MCF 10A (cell line): ENCODE measurements at regions of chr3 and their contacts with region 1.

Region 1: DNA sequence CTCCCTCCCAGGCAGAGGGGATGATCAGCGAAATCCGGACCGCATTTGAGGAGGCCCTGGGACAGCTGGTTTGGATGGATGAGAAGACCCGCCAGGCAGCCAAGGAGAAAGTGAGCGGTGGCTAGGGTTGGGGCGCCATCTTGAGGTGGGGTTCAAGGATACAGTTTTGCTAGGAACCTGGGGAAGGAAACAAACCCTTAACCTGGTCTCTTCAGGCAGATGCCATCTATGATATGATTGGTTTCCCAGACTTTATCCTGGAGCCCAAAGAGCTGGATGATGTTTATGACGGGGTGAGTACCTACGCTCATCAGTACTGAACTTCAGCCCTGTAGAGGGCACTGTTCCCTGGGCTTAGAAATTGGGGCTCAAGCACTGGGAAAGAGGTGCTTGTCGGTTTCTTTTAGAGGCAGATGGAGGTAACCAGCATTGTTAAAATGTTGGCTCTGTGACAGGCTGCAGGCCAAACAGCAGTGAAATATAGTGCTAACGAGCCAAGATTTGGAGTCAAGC is 9.6 kb upstream of the PSMD2 start:
- DNase-seq: peak; percentile 73
- H3K4me3 Mint-ChIP-seq: no peak overlapping the region
- H3K27ac Mint-ChIP-seq: no peak overlapping the region
- H3K4me1 Mint-ChIP-seq: no peaks in the 10 kb centered on the region
- H3K27me3 Mint-ChIP-seq: peaks cover 14% of the 10 kb centered on the region
- CTCF ChIP-seq: peak; percentile 70

Region 2: DNA sequence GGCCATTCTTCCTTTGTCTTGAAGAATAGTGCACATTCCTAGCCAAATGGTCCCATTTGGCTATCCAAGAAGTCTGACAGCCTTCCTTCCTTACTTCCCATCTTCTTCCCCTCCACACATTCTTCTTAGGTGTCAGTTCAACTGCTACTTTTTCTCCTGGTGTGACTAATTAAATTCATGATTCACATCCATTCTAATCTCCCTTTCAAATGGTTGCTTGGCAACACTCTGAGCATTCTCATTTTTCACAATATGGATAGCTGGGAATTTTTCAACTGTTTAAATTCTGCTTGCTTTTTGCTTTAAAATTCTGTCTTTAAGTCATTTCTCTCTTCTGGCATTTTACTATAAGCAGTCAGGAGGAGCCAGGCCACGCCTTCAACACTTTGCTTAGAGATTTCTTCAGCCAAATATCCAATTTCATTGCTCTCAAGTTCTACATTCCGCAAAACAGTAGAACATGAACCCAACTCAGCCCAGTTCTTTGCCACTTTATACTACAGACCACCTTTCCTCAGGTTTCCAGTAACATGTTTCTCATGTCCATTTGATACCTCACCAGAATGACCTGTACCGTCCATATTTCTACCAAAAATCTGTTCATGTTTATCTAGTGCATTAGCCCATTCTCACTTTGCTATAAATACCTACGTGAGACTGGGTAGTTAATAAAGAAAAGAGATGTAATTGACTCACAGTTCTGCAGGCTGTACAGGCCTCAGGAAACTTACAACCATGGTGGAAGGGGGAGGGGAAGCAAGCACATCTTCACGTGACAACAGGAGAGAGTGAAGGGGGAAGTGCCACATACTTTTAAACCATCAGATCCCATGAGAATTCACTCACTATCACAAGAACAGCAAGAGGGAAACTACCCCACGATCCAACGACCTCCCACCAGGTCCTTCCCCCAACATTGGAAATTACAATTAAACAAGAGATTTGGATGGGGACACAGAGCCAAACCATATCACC is 829.1 kb before region 1 on chr3:
- CTCF ChIA-PET with region 1: no interaction called
- POLR2A ChIA-PET with region 1: no interaction called
- intact Hi-C with region 1: loop called (anchors 10 kb)
- DNase-seq: no peak
- H3K4me3 Mint-ChIP-seq: no peak overlapping the region
- H3K27ac Mint-ChIP-seq: no peak overlapping the region
- H3K4me1 Mint-ChIP-seq: peaks cover 6% of the 10 kb centered on the region
- H3K27me3 Mint-ChIP-seq: no peaks in the 10 kb centered on the region
- CTCF ChIP-seq: no peak

Region 3: GRCh38 chr3:183895296-183895695 is 394.2 kb before region 1 on chr3:
- CTCF ChIA-PET with region 1: interaction called, 4 read pairs
- POLR2A ChIA-PET with region 1: no interaction called
- intact Hi-C with region 1: loop called (anchors 1 kb)
- DNase-seq: peak; percentile 60
- H3K4me3 Mint-ChIP-seq: no peak overlapping the region
- H3K27ac Mint-ChIP-seq: no peak overlapping the region
- H3K4me1 Mint-ChIP-seq: no peaks in the 10 kb centered on the region
- H3K27me3 Mint-ChIP-seq: no peaks in the 10 kb centered on the region
- CTCF ChIP-seq: peak; percentile 82

Region 4: DNA sequence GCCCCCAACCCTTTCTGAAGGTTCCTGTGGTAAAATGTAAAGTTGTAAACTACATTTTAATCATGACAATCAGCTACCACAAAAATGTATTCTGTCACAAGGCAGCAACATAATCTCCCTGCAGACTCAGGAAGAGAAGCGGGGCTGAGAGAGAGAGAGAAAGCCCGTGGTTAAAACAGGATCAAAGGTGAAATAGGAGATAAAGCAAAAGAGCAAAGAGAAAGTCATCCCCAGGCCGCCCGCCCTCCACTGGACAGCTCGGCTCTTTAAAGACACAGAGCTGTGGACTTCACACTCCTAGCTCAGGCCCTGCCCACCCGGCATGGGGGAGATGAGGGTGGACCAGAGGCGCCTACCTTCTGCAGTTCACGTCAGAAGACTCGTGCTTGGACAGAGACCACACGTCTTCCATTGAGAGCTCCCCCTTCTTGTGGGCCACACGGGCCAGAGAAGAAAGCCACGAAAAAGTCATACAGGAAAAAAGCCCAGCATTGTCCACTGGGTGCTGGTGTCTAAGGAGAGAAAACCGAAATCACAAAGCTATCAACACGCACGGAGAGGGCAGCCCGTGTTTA is 301.2 kb before region 1 on chr3:
- CTCF ChIA-PET with region 1: no interaction called
- POLR2A ChIA-PET with region 1: no interaction called
- intact Hi-C with region 1: no loop called
- DNase-seq: no peak
- H3K4me3 Mint-ChIP-seq: no peak overlapping the region
- H3K27ac Mint-ChIP-seq: no peak overlapping the region
- H3K4me1 Mint-ChIP-seq: no peaks in the 10 kb centered on the region
- H3K27me3 Mint-ChIP-seq: no peaks in the 10 kb centered on the region
- CTCF ChIP-seq: no peak

Region 5: DNA sequence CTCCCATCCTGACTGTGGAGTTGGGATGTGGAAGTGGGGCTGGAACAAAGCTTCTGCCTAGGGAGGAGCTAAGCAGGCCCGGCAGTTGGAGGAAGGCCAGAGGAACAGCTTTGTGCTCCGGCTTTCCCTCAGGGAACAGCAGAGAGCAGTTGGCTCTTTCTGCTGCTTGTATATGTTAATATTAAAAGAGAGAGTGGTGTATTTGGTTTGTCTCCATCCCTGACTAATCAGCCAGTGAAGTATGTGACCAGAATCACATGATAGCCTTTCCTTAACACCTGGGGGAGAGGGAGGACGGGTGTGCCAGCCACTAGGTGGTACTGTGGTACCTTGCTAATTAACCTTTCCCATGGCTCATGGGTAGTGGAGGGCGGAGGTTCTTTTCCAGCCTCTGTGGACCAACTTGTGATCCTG is 144.4 kb before region 1 on chr3:
- CTCF ChIA-PET with region 1: no interaction called
- POLR2A ChIA-PET with region 1: no interaction called
- intact Hi-C with region 1: loop called (anchors 2 kb)
- DNase-seq: peak; percentile 68
- H3K4me3 Mint-ChIP-seq: no peak overlapping the region
- H3K27ac Mint-ChIP-seq: no peak overlapping the region
- H3K4me1 Mint-ChIP-seq: peaks cover 2% of the 10 kb centered on the region
- H3K27me3 Mint-ChIP-seq: no peaks in the 10 kb centered on the region
- CTCF ChIP-seq: peak; percentile 33

Region 6: DNA sequence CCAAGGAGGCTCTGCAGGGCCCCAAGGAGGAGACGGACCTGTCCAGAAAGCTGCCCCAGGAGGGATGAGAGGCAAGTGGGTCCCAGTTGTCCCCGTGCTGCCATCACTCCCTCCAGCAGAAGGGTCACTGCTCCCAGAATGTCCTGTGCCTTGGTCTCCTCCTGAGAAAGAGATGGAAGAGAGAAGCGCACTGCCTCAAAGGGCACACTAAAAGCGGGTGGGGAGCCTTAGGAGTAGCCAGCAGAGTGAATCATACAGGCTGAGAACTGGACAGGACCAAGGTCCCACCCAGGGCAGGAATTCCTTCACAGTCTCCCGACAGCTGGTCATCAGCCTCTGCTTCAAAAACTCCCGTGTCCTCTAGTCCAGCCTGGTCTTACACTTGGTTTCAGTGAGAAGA is 83.9 kb after region 1 on chr3:
- CTCF ChIA-PET with region 1: no interaction called
- POLR2A ChIA-PET with region 1: no interaction called
- intact Hi-C with region 1: no loop called
- DNase-seq: no peak
- H3K4me3 Mint-ChIP-seq: no peak overlapping the region
- H3K27ac Mint-ChIP-seq: no peak overlapping the region
- H3K4me1 Mint-ChIP-seq: peaks cover 11% of the 10 kb centered on the region
- H3K27me3 Mint-ChIP-seq: peaks cover 41% of the 10 kb centered on the region
- CTCF ChIP-seq: no peak

Region 7: DNA sequence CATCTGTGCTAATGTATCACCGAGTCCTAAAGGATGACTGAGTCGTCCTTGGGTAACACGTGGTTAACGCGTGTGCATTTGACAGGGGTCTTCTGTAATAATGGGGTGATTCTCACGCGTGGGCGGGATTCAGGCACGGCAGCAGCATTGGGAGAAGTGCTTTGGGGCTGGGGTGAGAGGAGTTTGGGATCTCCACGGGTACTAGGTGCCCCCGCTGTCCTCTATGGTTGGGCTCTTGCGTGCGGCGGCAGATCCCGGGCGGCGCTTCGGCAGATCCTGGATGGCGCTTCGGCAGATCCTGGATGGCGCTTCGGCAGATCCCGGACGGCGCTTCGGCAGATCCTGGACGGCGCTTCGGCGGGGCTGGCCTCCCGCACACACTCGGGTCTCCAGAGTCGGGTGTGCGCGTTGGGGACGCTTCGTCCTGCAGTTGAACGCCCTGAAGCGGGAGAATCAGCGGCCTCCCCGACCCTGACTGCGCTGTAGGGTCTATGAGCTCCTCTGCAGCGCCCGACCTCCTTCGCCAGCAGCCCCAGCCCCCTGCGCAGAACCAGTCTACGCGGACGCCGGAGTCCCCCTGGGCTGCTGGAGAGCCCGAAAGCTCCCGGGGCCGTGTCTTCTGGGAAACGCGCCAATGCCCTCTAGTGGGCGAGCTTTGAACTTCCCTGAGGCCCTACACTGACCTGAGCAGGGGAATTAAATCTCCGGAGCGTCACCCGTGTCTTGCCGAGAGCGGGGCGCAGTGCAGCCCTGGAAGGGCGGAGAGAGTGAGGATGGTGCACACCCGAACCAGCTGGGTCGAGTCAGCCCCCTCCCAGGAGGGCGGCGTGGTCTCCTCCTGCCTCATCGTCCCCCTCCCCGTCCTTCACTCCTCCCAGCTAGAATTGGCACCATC is 224.0 kb after region 1 on chr3:
- CTCF ChIA-PET with region 1: no interaction called
- POLR2A ChIA-PET with region 1: no interaction called
- intact Hi-C with region 1: no loop called
- DNase-seq: peak; percentile 74
- H3K4me3 Mint-ChIP-seq: peak overlapping the region; percentile 53
- H3K27ac Mint-ChIP-seq: no peak overlapping the region
- H3K4me1 Mint-ChIP-seq: no peaks in the 10 kb centered on the region
- H3K27me3 Mint-ChIP-seq: peaks cover 69% of the 10 kb centered on the region
- CTCF ChIP-seq: peak; percentile 80